CD4-positive, alpha-beta T cell (primary cell): ENCODE measurements at regions of chr18 and their contacts with region 1.

Region 1: GRCh38 chr18:56650944-56651770 is at the start of gene WDR7:
- DNase-seq: peak; percentile 87 to 98 (median 92)
- ATAC-seq: peak; percentile 87
- H3K4me3 ChIP-seq: peak within 1 kb of the TSS; percentile 93
- H3K4me3 Mint-ChIP-seq: peak within 1 kb of the TSS; percentile 95
- H3K27ac ChIP-seq: peak within 1 kb of the TSS; percentile 88 to 89
- H3K27ac Mint-ChIP-seq: peak within 1 kb of the TSS; percentile 93
- H3K4me1 ChIP-seq: peaks cover 32% of the 10 kb centered on the region
- H3K4me1 Mint-ChIP-seq: peaks cover 57% of the 10 kb centered on the region
- H3K27me3 ChIP-seq: no peaks in the 10 kb centered on the region
- H3K27me3 Mint-ChIP-seq: no peaks in the 10 kb centered on the region
- CTCF ChIP-seq: no peak
- total RNA-seq, gene WDR7: 28.8 to 30.5 TPM

Region 2: DNA sequence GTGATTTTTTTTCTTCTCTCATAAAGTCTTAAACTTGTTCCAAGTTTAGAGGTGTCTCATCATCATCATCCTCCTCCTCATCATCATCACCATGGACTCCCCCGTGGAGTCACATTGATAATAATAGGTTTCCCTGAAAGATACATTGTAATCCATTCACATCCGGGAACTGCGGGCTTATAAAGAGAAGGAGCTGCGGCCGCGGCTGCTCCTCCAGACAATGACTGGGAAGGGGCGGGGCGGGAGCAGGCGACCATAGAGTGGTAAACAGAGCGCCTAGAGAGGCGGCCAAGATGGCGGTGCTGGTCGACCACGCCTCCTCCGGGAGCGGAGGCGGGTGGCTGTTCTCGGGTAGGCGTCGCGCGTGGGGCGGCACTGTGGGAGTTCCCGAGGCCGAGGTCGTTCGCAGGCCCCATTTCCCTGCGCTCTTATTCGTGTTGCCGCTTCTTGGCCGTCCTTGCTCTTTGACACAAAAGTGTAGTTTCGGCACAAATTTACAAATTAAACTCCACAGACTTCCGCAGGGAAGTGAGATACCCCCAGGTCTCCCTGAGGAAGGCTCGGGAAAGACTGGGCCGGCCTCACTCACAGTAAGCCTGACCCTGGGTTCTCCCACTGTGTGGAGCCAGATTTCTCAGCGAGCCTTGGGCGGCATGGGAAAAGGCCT is 1061.4 kb before region 1 on chr18:
- CTCF ChIA-PET with region 1: no interaction called
- POLR2A ChIA-PET with region 1: no interaction called
- intact Hi-C with region 1: loop called in 1 of 2 experiments (anchors 5 kb)
- DNase-seq: peak; percentile 10 to 88 (median 66)
- ATAC-seq: peak; percentile 90
- H3K4me3 ChIP-seq: peak overlapping the region; percentile 56
- H3K4me3 Mint-ChIP-seq: peak overlapping the region; percentile 92
- H3K27ac ChIP-seq: no peak overlapping the region
- H3K27ac Mint-ChIP-seq: peak overlapping the region; percentile 78
- H3K4me1 ChIP-seq: peaks cover 7% of the 10 kb centered on the region
- H3K4me1 Mint-ChIP-seq: peaks cover 29% of the 10 kb centered on the region
- H3K27me3 ChIP-seq: peaks cover 20 to 31% of the 10 kb centered on the region in 2 experiments
- H3K27me3 Mint-ChIP-seq: peaks cover 54% of the 10 kb centered on the region
- CTCF ChIP-seq: no peak

Region 3: GRCh38 chr18:56606618-56607017 is 44.5 kb before region 1 on chr18:
- CTCF ChIA-PET with region 1: no interaction called
- POLR2A ChIA-PET with region 1: no interaction called
- intact Hi-C with region 1: no loop called
- DNase-seq: no peak
- ATAC-seq: no peak
- H3K4me3 ChIP-seq: no peak overlapping the region
- H3K4me3 Mint-ChIP-seq: no peak overlapping the region
- H3K27ac ChIP-seq: no peak overlapping the region
- H3K27ac Mint-ChIP-seq: no peak overlapping the region
- H3K4me1 ChIP-seq: no peaks in the 10 kb centered on the region
- H3K4me1 Mint-ChIP-seq: no peaks in the 10 kb centered on the region
- H3K27me3 ChIP-seq: no peaks in the 10 kb centered on the region
- H3K27me3 Mint-ChIP-seq: no peaks in the 10 kb centered on the region
- CTCF ChIP-seq: no peak

Region 4: DNA sequence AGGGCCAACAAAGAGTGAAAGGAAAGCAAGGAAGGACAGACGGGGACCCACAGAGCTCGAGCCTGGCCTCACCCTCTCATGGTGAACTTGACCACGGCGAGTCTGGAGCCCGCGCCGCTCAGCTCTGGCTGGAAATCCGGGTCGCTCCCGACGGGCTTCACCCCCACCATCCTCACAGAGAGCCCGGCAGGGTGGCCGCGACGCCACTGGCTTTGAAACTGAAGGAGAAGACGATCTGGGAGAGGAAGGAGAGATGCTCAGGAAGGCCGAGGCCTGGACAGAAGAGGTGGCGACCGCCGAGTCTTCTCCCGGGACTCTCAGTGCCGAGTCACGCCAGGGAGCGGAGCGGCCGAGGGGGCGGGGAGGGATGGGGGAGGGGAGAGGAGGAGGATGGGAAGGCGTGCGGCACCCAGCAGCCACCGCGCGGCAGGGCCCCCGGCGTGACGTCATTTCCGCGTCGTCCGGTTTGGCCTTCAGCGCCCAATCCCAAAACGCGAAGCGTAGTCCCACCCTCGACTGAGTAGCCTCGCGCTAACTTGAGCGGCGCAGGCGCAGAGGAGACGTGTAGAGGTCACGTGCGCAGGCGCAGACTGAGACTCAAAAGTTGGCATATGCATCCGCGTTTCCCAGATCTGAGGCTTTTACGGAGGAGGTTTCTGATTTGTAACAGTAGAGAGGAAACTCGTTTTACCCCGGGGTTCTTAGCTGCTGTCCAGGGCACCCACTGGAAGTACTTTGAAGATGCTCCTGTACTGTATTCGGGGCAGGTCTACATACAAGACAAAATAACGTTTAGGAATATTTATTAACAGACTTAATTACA is 12.7 kb before region 1 on chr18 and contains the start of gene TXNL1:
- CTCF ChIA-PET with region 1: interaction called, 6 read pairs
- POLR2A ChIA-PET with region 1: interaction called, 70 read pairs
- intact Hi-C with region 1: loop called (anchors 1 kb)
- DNase-seq: peak; percentile 97 to 100 (median 99)
- ATAC-seq: peak; percentile 95
- H3K4me3 ChIP-seq: peak within 1 kb of the TSS; percentile 94
- H3K4me3 Mint-ChIP-seq: peak within 1 kb of the TSS; percentile 95
- H3K27ac ChIP-seq: peak within 1 kb of the TSS; percentile 83 to 91
- H3K27ac Mint-ChIP-seq: peak within 1 kb of the TSS; percentile 92
- H3K4me1 ChIP-seq: peaks cover 16% of the 10 kb centered on the region
- H3K4me1 Mint-ChIP-seq: peaks cover 52% of the 10 kb centered on the region
- H3K27me3 ChIP-seq: no peaks in the 10 kb centered on the region
- H3K27me3 Mint-ChIP-seq: no peaks in the 10 kb centered on the region
- CTCF ChIP-seq: no peak
- total RNA-seq, gene TXNL1: 41.5 to 41.6 TPM

Region 5: DNA sequence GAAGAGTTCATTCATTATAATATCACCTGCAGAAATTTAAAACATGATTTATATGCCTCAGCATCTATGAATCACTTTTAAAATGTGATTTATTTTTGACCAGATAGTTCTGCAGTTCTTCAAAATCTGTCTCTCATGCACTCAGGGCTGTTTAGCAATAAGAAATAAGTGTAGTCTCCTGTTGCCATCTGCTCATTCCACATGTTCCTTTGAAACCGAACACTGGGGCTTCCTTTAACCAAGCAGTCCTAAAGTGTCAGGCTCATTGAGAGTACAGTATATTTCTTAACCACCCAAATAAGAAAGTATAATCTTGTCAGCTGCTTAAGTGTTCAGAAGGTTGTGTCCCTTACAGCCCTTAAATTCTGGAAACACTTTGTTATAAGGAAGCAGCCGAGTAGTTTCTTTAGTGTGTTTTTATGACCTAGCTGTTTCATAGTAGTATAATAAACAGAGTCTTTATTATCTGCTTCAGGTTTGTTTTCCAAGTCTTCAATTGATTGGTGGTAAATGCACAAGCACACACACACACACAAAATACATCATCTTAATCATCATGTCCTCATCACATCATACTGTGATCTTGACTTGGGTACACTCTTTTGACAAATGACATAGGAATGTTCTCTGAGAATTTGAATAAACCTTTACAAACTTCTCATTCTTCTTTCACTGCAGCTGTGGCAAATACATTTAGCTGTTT is 10.4 kb after region 1 on chr18:
- CTCF ChIA-PET with region 1: no interaction called
- POLR2A ChIA-PET with region 1: interaction called, 10 read pairs
- intact Hi-C with region 1: no loop called
- DNase-seq: no peak
- ATAC-seq: no peak
- H3K4me3 ChIP-seq: no peak overlapping the region
- H3K4me3 Mint-ChIP-seq: no peak overlapping the region
- H3K27ac ChIP-seq: no peak overlapping the region
- H3K27ac Mint-ChIP-seq: no peak overlapping the region
- H3K4me1 ChIP-seq: no peaks in the 10 kb centered on the region
- H3K4me1 Mint-ChIP-seq: peaks cover 57% of the 10 kb centered on the region
- H3K27me3 ChIP-seq: no peaks in the 10 kb centered on the region
- H3K27me3 Mint-ChIP-seq: no peaks in the 10 kb centered on the region
- CTCF ChIP-seq: no peak

Region 6: GRCh38 chr18:56709463-56709862 is 58.3 kb after region 1 on chr18:
- CTCF ChIA-PET with region 1: interaction called, 3 read pairs
- POLR2A ChIA-PET with region 1: interaction called, 3 read pairs
- intact Hi-C with region 1: loop called in 1 of 2 experiments (anchors 5 kb)
- DNase-seq: peak in 8 of 14 experiments; percentile 20 to 76 (median 32)
- ATAC-seq: peak; percentile 100
- H3K4me3 ChIP-seq: no peak overlapping the region
- H3K4me3 Mint-ChIP-seq: no peak overlapping the region
- H3K27ac ChIP-seq: no peak overlapping the region
- H3K27ac Mint-ChIP-seq: no peak overlapping the region
- H3K4me1 ChIP-seq: no peaks in the 10 kb centered on the region
- H3K4me1 Mint-ChIP-seq: peaks cover 4% of the 10 kb centered on the region
- H3K27me3 ChIP-seq: no peaks in the 10 kb centered on the region
- H3K27me3 Mint-ChIP-seq: no peaks in the 10 kb centered on the region
- CTCF ChIP-seq: peak; percentile 53

Region 7: GRCh38 chr18:57586251-57587049 is 935.3 kb after region 1 on chr18 and contains the start of gene FECH:
- CTCF ChIA-PET with region 1: no interaction called
- POLR2A ChIA-PET with region 1: no interaction called
- intact Hi-C with region 1: loop called in 1 of 2 experiments (anchors 5 kb)
- DNase-seq: peak; percentile 18 to 84 (median 60)
- ATAC-seq: peak; percentile 94
- H3K4me3 ChIP-seq: peak within 1 kb of the TSS; percentile 74
- H3K4me3 Mint-ChIP-seq: peak within 1 kb of the TSS; percentile 93
- H3K27ac ChIP-seq: no peak within 1 kb of the TSS
- H3K27ac Mint-ChIP-seq: peak within 1 kb of the TSS; percentile 76
- H3K4me1 ChIP-seq: peaks cover 17% of the 10 kb centered on the region
- H3K4me1 Mint-ChIP-seq: peaks cover 28% of the 10 kb centered on the region
- H3K27me3 ChIP-seq: no peaks in the 10 kb centered on the region
- H3K27me3 Mint-ChIP-seq: no peaks in the 10 kb centered on the region
- CTCF ChIP-seq: no peak
- total RNA-seq, gene FECH: 7.5 to 8.1 TPM